OCI-LY7 (cell line): ENCODE measurements at regions of chr19 and their contacts with region 1.

Region 1: DNA sequence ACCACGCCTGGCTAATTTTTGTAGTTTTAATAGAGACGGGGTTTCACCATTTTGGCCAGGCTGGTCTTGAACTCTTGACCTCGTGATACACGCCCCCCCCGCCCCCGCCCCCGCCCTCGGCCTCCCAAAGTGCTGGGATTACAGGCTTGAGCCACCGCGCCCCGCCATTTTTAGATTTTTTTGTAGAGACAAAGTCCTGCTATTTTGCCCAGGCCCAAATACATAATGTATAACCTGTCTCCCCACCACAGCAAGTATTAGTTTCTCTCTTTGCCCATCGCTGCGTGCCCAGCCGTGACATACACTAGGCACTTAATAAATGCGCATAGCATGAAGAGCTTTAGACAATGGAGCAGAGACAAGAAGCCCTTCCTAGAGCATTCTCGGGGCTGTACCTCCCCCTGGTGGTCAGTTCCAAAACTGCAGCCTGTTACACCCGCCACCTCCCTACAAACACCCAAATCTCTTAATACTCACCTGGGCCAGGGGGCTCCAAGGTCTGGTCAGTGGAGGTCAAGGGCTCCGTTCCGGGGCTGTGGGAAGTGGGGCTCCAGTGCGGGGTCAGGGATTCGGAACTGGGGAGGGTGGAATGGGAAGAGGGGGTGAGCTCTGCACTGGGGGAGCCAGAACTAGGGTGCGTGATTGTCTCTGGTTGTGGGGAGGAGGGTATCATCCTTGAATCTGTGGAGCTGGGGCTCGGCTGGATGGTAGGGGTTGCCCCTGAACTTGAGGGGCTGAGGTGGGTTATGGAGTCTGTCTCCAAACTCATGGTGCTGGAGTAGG is 22.5 kb downstream of the IQCN start:
- DNase-seq: peak; percentile 74
- H3K4me3 ChIP-seq: no peak overlapping the region
- H3K27ac ChIP-seq: no peak overlapping the region
- H3K4me1 ChIP-seq: peaks cover 24% of the 10 kb centered on the region
- CTCF ChIP-seq: peak; percentile 99

Region 2: DNA sequence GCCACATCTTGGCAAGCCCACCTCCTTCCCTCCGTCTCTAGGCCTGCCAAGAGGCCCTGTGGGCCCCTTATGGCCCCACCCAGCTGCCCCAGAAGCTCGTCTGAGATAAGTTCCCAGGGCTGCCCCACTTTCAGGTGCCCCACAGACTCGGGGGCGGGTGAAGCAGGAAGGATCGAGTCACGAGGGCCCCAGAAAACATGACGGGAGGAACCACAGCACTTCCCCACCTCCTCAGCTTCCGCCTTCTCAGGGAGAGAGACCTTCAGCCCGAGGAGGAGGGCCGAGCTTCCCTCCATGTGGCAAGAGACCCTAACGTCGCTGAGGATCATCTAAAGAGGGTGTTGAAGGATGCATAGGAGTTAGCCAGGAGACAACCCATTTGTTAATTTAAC is 160.6 kb before region 1 on chr19:
- CTCF ChIA-PET with region 1: interaction called, 12 read pairs
- POLR2A ChIA-PET with region 1: no interaction called
- intact Hi-C with region 1: no loop called
- DNase-seq: peak; percentile 83
- H3K4me3 ChIP-seq: peak overlapping the region; percentile 53
- H3K27ac ChIP-seq: peak overlapping the region; percentile 97
- H3K4me1 ChIP-seq: peaks cover 94% of the 10 kb centered on the region
- CTCF ChIP-seq: no peak

Region 3: DNA sequence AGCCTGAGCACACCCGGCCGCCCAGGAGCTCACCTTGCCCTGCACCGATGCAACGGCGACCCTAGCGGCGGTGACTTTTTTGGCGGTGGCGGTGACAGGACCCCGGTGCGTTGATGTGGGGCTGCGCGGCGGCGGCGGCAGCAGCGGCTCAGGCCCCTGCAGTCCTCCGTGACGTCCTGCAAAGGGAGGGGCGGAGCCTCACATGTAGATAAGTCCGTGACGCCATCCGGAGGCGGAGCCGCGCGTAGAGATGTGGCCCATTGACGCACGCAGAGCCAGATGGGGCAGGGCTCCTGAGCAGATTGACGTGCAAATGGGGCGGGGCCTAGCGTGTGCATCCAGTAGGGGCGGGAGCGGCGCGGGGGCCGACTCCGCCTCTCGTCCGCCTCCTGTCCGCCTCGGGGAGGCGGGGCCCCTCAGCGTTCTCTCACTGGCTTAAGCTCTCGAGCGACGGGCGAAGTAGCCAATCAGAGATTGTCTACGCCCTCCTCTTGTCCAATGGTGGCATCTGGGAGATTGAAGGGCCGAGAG is 47.9 kb before region 1 on chr19 and contains the start of gene RAB3A:
- CTCF ChIA-PET with region 1: interaction called, 6 read pairs
- POLR2A ChIA-PET with region 1: interaction called, 4 read pairs
- intact Hi-C with region 1: loop called (anchors 1 kb)
- DNase-seq: peak; percentile 100
- H3K4me3 ChIP-seq: peak within 1 kb of the TSS; percentile 87
- H3K27ac ChIP-seq: peak within 1 kb of the TSS; percentile 84
- H3K4me1 ChIP-seq: peaks cover 29% of the 10 kb centered on the region
- CTCF ChIP-seq: no peak
- total RNA-seq, gene RAB3A: 2.9 and 4.9 TPM in 2 replicates

Region 4: GRCh38 chr19:18229474-18229873 is 22.3 kb before region 1 on chr19:
- CTCF ChIA-PET with region 1: interaction called, 5 read pairs
- POLR2A ChIA-PET with region 1: interaction called, 3 read pairs
- intact Hi-C with region 1: loop called (anchors 2 kb)
- DNase-seq: no peak
- H3K4me3 ChIP-seq: no peak overlapping the region
- H3K27ac ChIP-seq: no peak overlapping the region
- H3K4me1 ChIP-seq: peaks cover 64% of the 10 kb centered on the region
- CTCF ChIP-seq: peak; percentile 76

Region 5: DNA sequence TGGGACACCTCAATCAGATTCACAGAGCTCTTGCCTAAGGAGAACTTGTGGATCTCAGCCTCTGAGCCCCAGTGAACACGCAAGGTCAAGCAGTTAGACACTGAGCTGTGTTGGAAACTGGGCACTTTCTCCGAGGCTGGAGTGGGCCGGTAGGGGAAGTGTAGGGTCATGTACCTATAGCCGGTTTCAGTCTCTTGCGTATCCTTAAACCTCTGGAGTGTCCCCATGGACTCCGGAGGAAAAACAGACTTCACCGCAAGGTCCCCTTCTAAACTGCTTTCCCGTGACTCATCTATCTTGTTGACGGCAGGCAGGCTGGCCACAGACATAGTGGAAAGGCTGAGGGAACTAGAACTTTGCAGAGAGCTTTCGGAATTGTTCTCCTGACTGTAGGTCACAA is 11.1 kb after region 1 on chr19:
- CTCF ChIA-PET with region 1: no interaction called
- POLR2A ChIA-PET with region 1: no interaction called
- intact Hi-C with region 1: no loop called
- DNase-seq: no peak
- H3K4me3 ChIP-seq: no peak overlapping the region
- H3K27ac ChIP-seq: no peak overlapping the region
- H3K4me1 ChIP-seq: peaks cover 11% of the 10 kb centered on the region
- CTCF ChIP-seq: no peak

Region 6: GRCh38 chr19:18291590-18292461 is 40.0 kb after region 1 on chr19:
- CTCF ChIA-PET with region 1: interaction called, 10 read pairs
- POLR2A ChIA-PET with region 1: no interaction called
- intact Hi-C with region 1: no loop called
- DNase-seq: peak; percentile 81
- H3K4me3 ChIP-seq: peak overlapping the region; percentile 73
- H3K27ac ChIP-seq: peak overlapping the region; percentile 59
- H3K4me1 ChIP-seq: peaks cover 57% of the 10 kb centered on the region
- CTCF ChIP-seq: no peak

Region 7: GRCh38 chr19:18469069-18469846 is 217.5 kb after region 1 on chr19:
- CTCF ChIA-PET with region 1: no interaction called
- POLR2A ChIA-PET with region 1: no interaction called
- intact Hi-C with region 1: no loop called
- DNase-seq: peak; percentile 45
- H3K4me3 ChIP-seq: no peak overlapping the region
- H3K27ac ChIP-seq: no peak overlapping the region
- H3K4me1 ChIP-seq: no peaks in the 10 kb centered on the region
- CTCF ChIP-seq: peak; percentile 81